ENCODE measurements at regions of chr16 and their contacts with region 1.

Region 1: DNA sequence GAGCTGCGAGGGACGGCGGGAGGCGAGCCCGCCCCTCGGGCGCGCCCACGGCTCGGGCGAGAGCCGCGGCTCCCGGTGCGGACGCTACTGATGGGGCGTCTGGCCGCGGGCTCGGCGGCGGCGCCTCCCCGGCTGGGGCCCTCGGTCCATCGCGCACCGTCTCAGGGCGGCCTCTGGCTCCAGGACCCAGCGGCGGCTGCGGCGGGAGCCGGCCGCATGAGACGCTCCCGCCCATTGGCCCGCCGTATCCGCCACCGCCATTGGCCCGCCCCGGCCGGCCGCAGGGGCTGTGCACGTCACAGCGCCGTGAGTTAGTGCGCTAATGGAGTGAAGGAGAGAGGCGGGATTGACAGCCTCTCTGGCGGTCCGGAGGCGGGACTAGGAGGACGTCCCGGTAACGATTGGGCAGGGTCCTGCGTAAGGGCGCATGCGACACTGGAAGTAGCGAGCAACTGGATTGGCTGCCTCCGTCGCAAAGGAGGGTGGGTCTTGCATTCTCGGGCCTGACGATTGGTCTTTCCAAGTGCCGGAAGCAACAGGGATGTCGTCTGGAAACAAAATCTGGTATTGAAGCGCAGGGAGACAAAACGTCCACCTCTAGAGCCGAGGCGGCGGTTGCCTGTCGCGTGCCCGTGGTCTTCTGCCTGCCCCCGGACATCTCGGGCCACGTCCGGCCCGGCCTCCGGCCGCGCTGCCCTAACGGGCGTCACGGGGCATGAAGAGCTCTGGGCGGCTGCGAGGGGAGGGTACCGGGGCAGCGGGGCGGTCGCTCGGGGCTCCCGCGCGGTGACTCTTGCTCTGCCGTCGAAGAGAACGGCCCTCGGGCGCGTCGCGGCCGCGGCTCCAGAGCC is at the start of gene ANKRD11:
- DNase-seq: peak; percentile 99 to 100 (median 99)
- ATAC-seq: peak; percentile 96 to 98 (median 96)
- H3K4me3 ChIP-seq: peak within 1 kb of the TSS; percentile 74 to 81 (median 80)
- H3K27ac ChIP-seq: peak within 1 kb of the TSS; percentile 89 to 93 (median 91)
- H3K4me1 ChIP-seq: peaks cover 0 to 37% (median 9%) of the 10 kb centered on the region in 4 donors
- H3K27me3 ChIP-seq: no peaks in the 10 kb centered on the region
- CTCF ChIP-seq: no peak
- POLR2A ChIP-seq: peak; percentile 97
- total RNA-seq, gene ANKRD11: 26.2 to 65.8 (median 41.6) TPM

Region 2: DNA sequence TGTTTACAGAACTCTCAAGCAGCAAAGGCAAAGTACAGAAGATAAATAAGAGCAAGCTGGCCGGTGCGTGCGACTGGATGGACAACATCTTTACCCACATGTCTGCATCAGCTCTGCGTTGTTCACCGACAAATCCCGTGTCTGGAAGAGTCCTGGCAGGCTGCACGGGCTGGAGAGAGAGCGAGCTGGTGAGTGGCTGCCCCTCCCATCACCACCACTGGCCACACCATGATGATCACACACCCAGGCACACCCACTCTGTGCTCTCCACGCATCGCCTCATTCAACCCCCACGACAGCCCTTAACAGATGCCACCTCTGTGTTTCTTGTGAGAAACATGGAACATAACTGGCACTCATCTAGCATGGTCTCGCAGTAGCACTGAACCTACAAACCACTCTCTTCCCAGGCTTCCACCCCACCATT is 59.4 kb before region 1 on chr16:
- intact Hi-C with region 1: loop called in 1 of 2 experiments (anchors 10 kb)
- DNase-seq: peak in 1 of 3 donors; percentile 65
- ATAC-seq: peak; percentile 63 to 73 (median 68)
- H3K4me3 ChIP-seq: no peak overlapping the region
- H3K27ac ChIP-seq: peak overlapping the region in 1 of 3 donors; percentile 55
- H3K4me1 ChIP-seq: peaks cover 0 to 22% (median 7%) of the 10 kb centered on the region in 4 donors
- H3K27me3 ChIP-seq: no peaks in the 10 kb centered on the region
- CTCF ChIP-seq: no peak
- POLR2A ChIP-seq: no peak